Activated naive CD4-positive, alpha-beta T cell treated with anti-CD3 and anti-CD28 coated beads for 36 hours (primary cell): ENCODE measurements at regions of chr10 and their contacts with region 1.

Region 1: GRCh38 chr10:121734589-121735045 is 136.4 kb upstream of the FGFR2 start:
- DNase-seq: peak; percentile 25
- H3K4me3 Mint-ChIP-seq: no peak overlapping the region
- H3K27ac Mint-ChIP-seq: no peak overlapping the region
- H3K4me1 Mint-ChIP-seq: peaks cover 7% of the 10 kb centered on the region
- H3K27me3 Mint-ChIP-seq: peaks cover 39% of the 10 kb centered on the region

Region 2: GRCh38 chr10:120942806-120943413 is 791.7 kb before region 1 on chr10:
- CTCF ChIA-PET with region 1: interaction called, 4 read pairs
- intact Hi-C with region 1: loop called (anchors 1 kb)
- DNase-seq: peak; percentile 87
- H3K4me3 Mint-ChIP-seq: no peak overlapping the region
- H3K27ac Mint-ChIP-seq: no peak overlapping the region
- H3K4me1 Mint-ChIP-seq: peaks cover 6% of the 10 kb centered on the region
- H3K27me3 Mint-ChIP-seq: peaks cover 17% of the 10 kb centered on the region

Region 3: DNA sequence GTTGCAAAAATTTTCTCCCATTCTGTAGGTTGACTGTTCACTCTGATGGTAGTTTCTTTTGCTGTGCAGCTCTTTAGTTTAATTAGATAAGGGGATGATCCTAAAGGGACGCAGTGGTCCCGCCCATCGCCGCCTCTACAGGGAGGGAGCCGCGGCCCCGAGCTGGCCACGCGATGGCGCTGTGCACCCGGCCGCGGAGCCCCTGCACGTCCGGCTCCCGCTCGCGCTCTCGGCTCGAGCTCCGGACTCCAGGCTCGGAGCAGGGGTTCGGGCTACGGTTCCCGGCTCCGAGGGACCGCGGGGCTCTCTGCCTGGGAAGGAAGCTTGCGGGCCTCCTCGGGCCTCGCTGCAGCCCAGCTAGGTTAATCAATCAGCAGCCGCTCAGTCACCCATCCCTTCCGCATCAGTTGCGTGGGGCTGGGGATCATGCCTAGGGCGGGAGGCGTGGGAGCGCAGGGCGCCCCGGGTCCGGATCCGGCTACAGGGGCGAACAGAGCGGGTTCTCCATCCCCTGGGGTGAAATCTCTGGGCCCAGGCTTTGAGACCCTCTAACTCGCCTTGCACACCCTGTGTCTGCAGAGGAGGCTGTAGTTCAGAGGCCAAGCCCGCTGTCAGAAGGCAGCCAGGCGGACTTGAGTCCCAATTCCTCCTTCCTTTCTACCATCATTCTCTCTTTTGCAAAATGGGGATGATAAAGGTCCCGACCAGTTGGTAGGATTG is 785.6 kb before region 1 on chr10:
- CTCF ChIA-PET with region 1: interaction called, 5 read pairs
- intact Hi-C with region 1: loop called (anchors 1 kb)
- DNase-seq: peak; percentile 68
- H3K4me3 Mint-ChIP-seq: no peak overlapping the region
- H3K27ac Mint-ChIP-seq: no peak overlapping the region
- H3K4me1 Mint-ChIP-seq: peaks cover 7% of the 10 kb centered on the region
- H3K27me3 Mint-ChIP-seq: peaks cover 44% of the 10 kb centered on the region